Naive thymus-derived CD4-positive, alpha-beta T cell (primary cell): ENCODE measurements at regions of chr5 and their contacts with region 1.

Region 1: GRCh38 chr5:140564196-140565023 is at the starts of genes APBB3 and SLC35A4:
- DNase-seq: peak; percentile 89 to 99 (median 98)
- ATAC-seq: peak; percentile 92
- H3K4me3 ChIP-seq: peak within 1 kb of the TSS; percentile 91
- H3K4me3 Mint-ChIP-seq: peak within 1 kb of the TSS; percentile 91 to 96 (median 94)
- H3K27ac ChIP-seq: peak within 1 kb of the TSS; percentile 94
- H3K27ac Mint-ChIP-seq: peak within 1 kb of the TSS; percentile 92 to 99 (median 96)
- H3K4me1 ChIP-seq: peaks cover 21 to 25% of the 10 kb centered on the region in 2 donors
- H3K4me1 Mint-ChIP-seq: peaks cover 27 to 75% (median 62%) of the 10 kb centered on the region in 7 donors
- H3K27me3 ChIP-seq: no peaks in the 10 kb centered on the region
- H3K27me3 Mint-ChIP-seq: no peaks in the 10 kb centered on the region
- total RNA-seq, gene APBB3: 37.9 to 77.8 (median 72.4) TPM
- total RNA-seq, gene SLC35A4: 40.4 to 90.1 (median 52.4) TPM

Region 2: DNA sequence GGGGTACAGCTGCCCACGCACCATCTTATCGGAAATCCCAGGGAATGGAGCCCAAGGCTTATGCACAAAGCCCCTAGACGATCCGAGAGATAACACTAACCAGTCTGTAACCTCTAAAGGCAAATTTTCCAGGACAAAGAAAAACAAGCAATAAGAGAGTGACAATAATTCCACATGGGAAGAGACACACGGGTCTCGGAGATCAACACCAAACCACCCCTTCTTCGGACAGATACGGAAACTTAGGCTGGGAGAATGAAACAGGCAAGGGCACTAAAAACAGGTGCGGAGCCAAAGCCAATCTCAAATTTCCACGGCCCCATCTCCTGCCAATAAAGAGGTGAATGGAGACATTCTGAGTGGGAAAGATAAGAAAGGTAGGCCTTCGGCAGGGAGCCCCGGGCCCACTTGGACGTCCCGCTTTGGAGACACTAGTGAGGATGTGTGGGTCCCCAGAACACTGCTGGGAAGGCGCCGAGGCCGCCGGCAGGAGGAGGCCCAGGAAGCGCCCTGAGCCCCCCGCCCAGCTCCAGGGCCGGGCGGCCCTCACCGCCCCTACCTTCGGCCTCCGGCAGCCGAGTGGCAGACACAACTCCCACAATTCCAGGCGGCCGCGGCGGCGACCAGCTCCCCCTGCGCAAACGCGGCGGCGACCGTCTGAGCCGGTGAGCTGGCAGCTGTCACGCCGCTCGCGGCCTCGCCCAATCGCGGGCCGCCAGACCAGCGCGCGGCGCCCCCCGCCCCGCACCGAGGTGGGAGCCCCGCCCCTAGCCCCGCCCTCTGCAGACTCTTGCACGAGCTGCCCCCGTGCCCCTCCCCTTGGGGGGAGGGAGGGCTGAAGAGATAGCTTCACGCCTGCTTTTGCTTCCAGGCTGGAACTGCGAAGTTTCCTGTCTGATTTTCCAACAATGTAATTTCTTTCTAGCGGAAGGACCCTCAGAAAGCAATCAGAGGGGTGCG is 1366.4 kb before region 1 on chr5 and contains the start of gene SIL1:
- CTCF ChIA-PET with region 1: no interaction called
- POLR2A ChIA-PET with region 1: no interaction called
- intact Hi-C with region 1: loop called in 1 of 2 experiments (anchors 5 kb)
- DNase-seq: peak; percentile 88 to 94 (median 91)
- ATAC-seq: peak; percentile 99
- H3K4me3 ChIP-seq: peak within 1 kb of the TSS; percentile 97
- H3K4me3 Mint-ChIP-seq: peak within 1 kb of the TSS; percentile 83 to 96 (median 90)
- H3K27ac ChIP-seq: peak within 1 kb of the TSS; percentile 89
- H3K27ac Mint-ChIP-seq: peak within 1 kb of the TSS; percentile 86 to 96 (median 91)
- H3K4me1 ChIP-seq: peaks cover 8% of the 10 kb centered on the region in 2 donors
- H3K4me1 Mint-ChIP-seq: peaks cover 17 to 38% (median 26%) of the 10 kb centered on the region in 7 donors
- H3K27me3 ChIP-seq: no peaks in the 10 kb centered on the region
- H3K27me3 Mint-ChIP-seq: no peaks in the 10 kb centered on the region
- total RNA-seq, gene SIL1: 11.9 to 27.1 (median 22.8) TPM

Region 3: DNA sequence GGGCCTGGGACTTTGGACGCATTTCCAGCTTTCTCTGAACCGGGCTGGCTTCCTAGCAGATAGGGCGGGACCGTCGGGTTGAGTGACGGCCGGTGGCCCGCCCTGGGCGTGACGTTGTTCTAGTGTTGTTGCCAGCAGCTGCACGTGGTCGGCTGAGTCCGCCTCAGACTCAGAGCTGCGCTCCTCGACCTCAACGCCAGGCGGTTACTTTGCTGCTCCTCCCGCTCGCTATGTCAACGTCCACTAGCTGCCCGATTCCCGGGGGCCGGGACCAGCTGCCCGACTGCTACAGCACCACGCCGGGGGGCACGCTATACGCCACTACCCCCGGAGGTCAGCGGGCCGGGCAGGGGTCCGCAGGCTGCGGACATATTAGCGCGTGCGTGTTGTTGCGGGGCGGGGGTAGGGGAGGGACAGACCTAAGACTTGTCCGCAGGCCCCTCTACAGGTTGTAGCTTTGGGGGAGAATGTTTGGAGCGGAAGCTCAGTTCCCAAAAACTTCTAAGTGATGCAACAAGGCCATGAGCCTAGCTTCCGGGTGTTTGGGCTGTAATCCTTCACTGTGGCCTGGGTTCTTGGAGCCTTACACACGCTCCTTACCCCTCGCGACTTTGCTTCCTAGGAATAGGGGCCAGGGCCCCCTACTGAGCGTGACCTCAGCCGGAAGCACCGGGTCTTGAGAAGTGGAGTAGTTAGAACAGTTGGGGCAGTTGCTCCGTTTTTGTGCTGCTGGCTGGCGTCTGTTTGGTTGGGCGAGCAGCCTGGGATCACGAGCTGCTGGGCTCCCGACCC is 16.7 kb before region 1 on chr5 and contains the start of gene EIF4EBP3:
- CTCF ChIA-PET with region 1: interaction called, 3 read pairs
- POLR2A ChIA-PET with region 1: interaction called, 248 read pairs
- intact Hi-C with region 1: loop called (anchors 1 kb)
- DNase-seq: peak; percentile 76 to 90 (median 88)
- ATAC-seq: peak; percentile 98
- H3K4me3 ChIP-seq: peak within 1 kb of the TSS; percentile 83
- H3K4me3 Mint-ChIP-seq: peak within 1 kb of the TSS; percentile 85 to 99 (median 92)
- H3K27ac ChIP-seq: peak within 1 kb of the TSS; percentile 89
- H3K27ac Mint-ChIP-seq: peak within 1 kb of the TSS; percentile 93 to 99 (median 98)
- H3K4me1 ChIP-seq: peaks cover 12 to 20% of the 10 kb centered on the region in 2 donors
- H3K4me1 Mint-ChIP-seq: peaks cover 22 to 49% (median 37%) of the 10 kb centered on the region in 7 donors
- H3K27me3 ChIP-seq: no peaks in the 10 kb centered on the region
- H3K27me3 Mint-ChIP-seq: no peaks in the 10 kb centered on the region
- total RNA-seq, gene EIF4EBP3: 12.5 to 19.5 (median 16.2) TPM

Region 4: GRCh38 chr5:140647042-140647341 is 82.6 kb after region 1 on chr5:
- CTCF ChIA-PET with region 1: no interaction called
- POLR2A ChIA-PET with region 1: interaction called, 40 read pairs
- intact Hi-C with region 1: loop called (anchors 1 kb)
- DNase-seq: no peak
- ATAC-seq: no peak
- H3K4me3 ChIP-seq: peak overlapping the region; percentile 80
- H3K4me3 Mint-ChIP-seq: peak overlapping the region; percentile 88 to 100 (median 98)
- H3K27ac ChIP-seq: peak overlapping the region; percentile 95
- H3K27ac Mint-ChIP-seq: peak overlapping the region; percentile 93 to 100 (median 99)
- H3K4me1 ChIP-seq: peaks cover 18% of the 10 kb centered on the region in 2 donors
- H3K4me1 Mint-ChIP-seq: peaks cover 32 to 72% (median 61%) of the 10 kb centered on the region in 7 donors
- H3K27me3 ChIP-seq: no peaks in the 10 kb centered on the region
- H3K27me3 Mint-ChIP-seq: no peaks in the 10 kb centered on the region

Region 5: GRCh38 chr5:140700177-140701144 is 136.1 kb after region 1 on chr5 and contains the start of gene ZMAT2:
- CTCF ChIA-PET with region 1: no interaction called
- POLR2A ChIA-PET with region 1: no interaction called
- intact Hi-C with region 1: loop called (anchors 1 kb)
- DNase-seq: peak; percentile 74 to 97 (median 92)
- ATAC-seq: peak; percentile 100
- H3K4me3 ChIP-seq: peak within 1 kb of the TSS; percentile 78
- H3K4me3 Mint-ChIP-seq: peak within 1 kb of the TSS; percentile 93 to 100 (median 98)
- H3K27ac ChIP-seq: peak within 1 kb of the TSS; percentile 87
- H3K27ac Mint-ChIP-seq: peak within 1 kb of the TSS; percentile 90 to 99 (median 97)
- H3K4me1 ChIP-seq: peaks cover 4 to 14% of the 10 kb centered on the region in 2 donors
- H3K4me1 Mint-ChIP-seq: peaks cover 18 to 35% (median 29%) of the 10 kb centered on the region in 7 donors
- H3K27me3 ChIP-seq: no peaks in the 10 kb centered on the region
- H3K27me3 Mint-ChIP-seq: no peaks in the 10 kb centered on the region
- total RNA-seq, gene ZMAT2: 37.7 to 63.0 (median 55.1) TPM

Region 6: GRCh38 chr5:141636413-141637122 is 1072.2 kb after region 1 on chr5 and contains the starts of genes HDAC3 and RELL2:
- CTCF ChIA-PET with region 1: no interaction called
- POLR2A ChIA-PET with region 1: no interaction called
- intact Hi-C with region 1: loop called in 1 of 2 experiments (anchors 5 kb)
- DNase-seq: peak; percentile 86 to 99 (median 94)
- ATAC-seq: peak; percentile 98
- H3K4me3 ChIP-seq: peak within 1 kb of the TSS; percentile 81
- H3K4me3 Mint-ChIP-seq: peak within 1 kb of the TSS; percentile 89 to 98 (median 92)
- H3K27ac ChIP-seq: peak within 1 kb of the TSS; percentile 88
- H3K27ac Mint-ChIP-seq: peak within 1 kb of the TSS; percentile 72 to 95 (median 92)
- H3K4me1 ChIP-seq: peaks cover 23 to 24% of the 10 kb centered on the region in 2 donors
- H3K4me1 Mint-ChIP-seq: peaks cover 35 to 56% (median 46%) of the 10 kb centered on the region in 7 donors
- H3K27me3 ChIP-seq: no peaks in the 10 kb centered on the region
- H3K27me3 Mint-ChIP-seq: no peaks in the 10 kb centered on the region
- total RNA-seq, gene HDAC3: 70.0 to 92.8 (median 79.0) TPM
- total RNA-seq, gene RELL2: 14.3 to 21.7 (median 17.5) TPM